Mammary epithelial cell (primary cell): ENCODE measurements at regions of chr9 and their contacts with region 1.

Region 1: GRCh38 chr9:137295238-137295811 is 6.7 kb downstream of the NRARP start:
- DNase-seq: no peak
- H3K4me3 ChIP-seq: peak overlapping the region in 2 of 3 experiments; percentile 12 to 43
- H3K27ac ChIP-seq: no peak overlapping the region
- H3K4me1 ChIP-seq: peaks cover 18% of the 10 kb centered on the region
- H3K27me3 ChIP-seq: peaks cover 2% of the 10 kb centered on the region
- CTCF ChIP-seq: peak; percentile 41

Region 2: DNA sequence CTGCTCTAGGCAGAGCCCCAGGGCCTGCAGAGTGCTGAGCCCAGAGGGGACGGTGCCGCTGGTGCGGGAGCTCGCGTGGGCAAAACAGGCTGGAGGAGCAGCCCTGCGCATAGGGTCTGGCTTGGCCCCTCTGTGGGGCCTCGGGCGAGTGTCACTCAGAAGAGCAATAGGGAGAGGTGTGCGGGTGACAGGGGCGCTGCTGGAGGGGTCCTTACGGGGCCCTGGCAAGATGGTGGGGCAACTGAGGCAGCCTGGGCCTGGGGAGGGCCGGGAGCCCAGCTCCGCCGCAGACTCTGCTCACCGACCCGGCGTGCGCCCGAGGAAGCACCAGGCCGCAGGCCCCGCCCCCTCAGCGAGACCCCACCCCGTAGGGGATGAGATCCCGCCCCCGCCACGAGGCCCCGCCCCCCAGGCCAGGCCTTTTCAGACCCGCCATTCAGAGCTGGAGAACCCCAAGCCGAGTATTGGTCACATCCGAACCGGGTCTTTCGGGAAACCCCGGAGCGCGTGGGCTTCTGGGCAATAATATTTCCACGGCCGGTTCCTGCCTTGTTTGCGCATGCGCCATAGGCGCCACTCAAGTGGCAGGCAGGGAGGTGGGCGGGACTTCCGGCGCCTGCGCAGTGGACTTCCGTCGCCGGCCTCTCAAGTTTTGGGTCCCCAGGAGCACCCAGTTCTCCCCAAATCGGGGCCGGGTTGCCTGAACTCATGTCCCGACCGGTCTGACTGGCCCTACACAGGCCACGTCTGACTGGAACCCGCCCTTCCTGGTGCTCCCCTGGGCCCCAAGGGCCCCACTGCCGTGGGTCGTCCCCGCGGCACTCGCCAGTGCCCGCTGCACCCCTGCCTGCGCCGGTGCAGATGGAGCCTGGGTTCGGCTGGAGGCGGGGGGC is 72.0 kb before region 1 on chr9:
- CTCF ChIA-PET with region 1: no interaction called
- dilution Hi-C with region 1: no loop called
- in situ Hi-C with region 1: no loop called
- intact Hi-C with region 1: no loop called
- DNase-seq: peak; percentile 96
- H3K4me3 ChIP-seq: peak overlapping the region; percentile 65 to 74 (median 67)
- H3K27ac ChIP-seq: peak overlapping the region; percentile 59
- H3K4me1 ChIP-seq: peaks cover 58% of the 10 kb centered on the region
- H3K27me3 ChIP-seq: no peaks in the 10 kb centered on the region
- CTCF ChIP-seq: no peak

Region 3: GRCh38 chr9:137406876-137407589 is 111.7 kb after region 1 on chr9:
- CTCF ChIA-PET with region 1: no interaction called
- dilution Hi-C with region 1: no loop called
- in situ Hi-C with region 1: no loop called
- intact Hi-C with region 1: loop called (anchors 2 kb)
- DNase-seq: peak; percentile 17
- H3K4me3 ChIP-seq: no peak overlapping the region
- H3K27ac ChIP-seq: no peak overlapping the region
- H3K4me1 ChIP-seq: peaks cover 23% of the 10 kb centered on the region
- H3K27me3 ChIP-seq: peaks cover 4% of the 10 kb centered on the region
- CTCF ChIP-seq: peak; percentile 30 to 49

Region 4: DNA sequence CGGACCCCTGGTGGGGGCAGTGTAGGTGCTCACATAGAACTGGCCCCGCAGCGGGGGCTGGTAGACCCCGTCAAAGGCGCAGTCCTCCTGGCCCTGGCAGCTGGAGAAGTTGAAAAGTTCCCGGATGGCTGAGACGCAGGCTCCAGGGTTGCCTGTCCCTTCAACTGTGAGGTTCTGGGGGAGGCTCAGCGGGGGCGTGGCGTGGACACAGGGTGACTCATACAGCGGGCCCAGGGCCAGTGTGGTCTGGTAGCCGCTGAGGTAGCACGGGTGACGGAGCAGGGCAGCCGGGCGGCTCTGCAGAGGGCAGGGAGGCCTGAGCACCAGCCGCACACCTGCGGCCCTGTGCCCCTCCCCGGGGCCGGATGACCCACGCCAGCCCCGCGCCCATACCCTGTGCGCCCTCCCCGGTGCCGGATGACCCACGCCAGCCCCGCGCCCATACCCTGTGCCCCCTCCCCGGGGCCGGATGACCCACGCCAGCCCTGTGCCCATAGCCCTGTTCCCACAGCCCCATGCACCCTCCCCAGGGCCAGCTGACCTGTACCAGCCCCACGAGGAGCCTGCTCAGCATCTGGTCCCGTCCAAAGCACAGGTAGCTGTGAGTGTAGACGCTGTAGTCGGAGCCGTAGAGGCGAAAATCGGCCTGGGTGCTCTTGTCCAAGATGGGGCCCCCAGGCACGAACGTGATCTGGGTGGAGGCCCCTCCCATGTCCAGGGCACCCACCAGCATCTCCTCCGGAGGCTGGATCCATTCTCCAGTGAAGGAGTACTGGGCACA is 140.8 kb after region 1 on chr9:
- CTCF ChIA-PET with region 1: no interaction called
- dilution Hi-C with region 1: no loop called
- in situ Hi-C with region 1: loop called (anchors 10 kb)
- intact Hi-C with region 1: no loop called
- DNase-seq: peak; percentile 80
- H3K4me3 ChIP-seq: no peak overlapping the region
- H3K27ac ChIP-seq: no peak overlapping the region
- H3K4me1 ChIP-seq: peaks cover 18% of the 10 kb centered on the region
- H3K27me3 ChIP-seq: no peaks in the 10 kb centered on the region
- CTCF ChIP-seq: no peak

Region 5: DNA sequence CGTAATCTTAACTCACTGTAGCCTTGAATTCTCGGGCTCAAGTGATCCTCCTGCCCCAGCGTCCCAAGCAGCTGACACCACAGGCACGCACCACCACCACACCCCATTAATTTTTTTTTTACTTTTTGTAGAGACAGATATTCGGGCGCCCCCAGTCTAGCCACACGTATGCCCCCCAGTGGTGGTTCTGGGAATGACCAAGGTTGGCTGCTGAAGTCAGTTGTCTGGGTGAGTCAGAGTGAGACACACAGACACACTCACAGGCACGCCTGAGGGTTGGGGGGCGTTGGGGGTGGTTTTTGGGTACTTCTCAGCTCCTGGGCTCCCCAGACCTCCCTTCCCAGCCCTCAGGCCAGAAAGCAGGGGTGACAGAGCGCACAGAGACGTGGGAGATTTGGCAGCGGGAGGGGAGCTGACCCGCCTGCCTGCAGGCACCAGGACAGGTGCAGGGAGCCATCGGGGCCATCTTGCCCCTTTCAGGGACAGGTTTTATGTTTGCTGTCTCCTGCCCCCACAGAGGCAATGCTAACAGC is 150.0 kb after region 1 on chr9:
- CTCF ChIA-PET with region 1: no interaction called
- dilution Hi-C with region 1: no loop called
- in situ Hi-C with region 1: loop called in 1 of 2 experiments (anchors 10 kb)
- intact Hi-C with region 1: loop called (anchors 1 kb)
- DNase-seq: peak; percentile 81
- H3K4me3 ChIP-seq: no peak overlapping the region
- H3K27ac ChIP-seq: no peak overlapping the region
- H3K4me1 ChIP-seq: peaks cover 17% of the 10 kb centered on the region
- H3K27me3 ChIP-seq: no peaks in the 10 kb centered on the region
- CTCF ChIP-seq: peak; percentile 81 to 83

Region 6: DNA sequence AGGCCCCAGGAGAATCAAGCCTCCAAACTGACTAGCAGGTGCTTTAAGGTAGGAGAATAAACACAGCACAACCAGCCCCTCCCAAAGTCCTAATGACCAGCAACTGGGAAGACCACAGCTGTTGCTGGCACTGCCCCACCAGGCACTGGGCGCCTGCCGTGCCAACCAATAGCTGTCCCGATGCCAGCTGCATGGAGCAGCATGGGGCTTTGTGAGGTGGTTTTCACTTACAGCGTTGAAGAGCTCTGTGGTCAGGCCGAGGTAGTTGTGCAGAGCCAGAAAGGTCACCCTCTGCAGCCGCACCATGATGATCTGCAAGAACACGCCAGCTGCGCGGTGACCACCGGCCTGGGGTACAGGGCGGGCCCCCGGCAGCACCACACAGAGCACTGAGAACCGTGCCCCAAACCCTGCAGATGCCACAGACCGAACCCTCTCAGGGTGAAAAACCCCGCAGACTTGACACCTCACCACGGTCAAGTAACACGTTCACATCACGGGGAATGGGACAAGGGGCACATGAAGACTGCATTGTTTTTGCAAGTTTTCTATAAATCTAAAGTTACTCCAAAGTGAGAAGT is 226.2 kb after region 1 on chr9:
- CTCF ChIA-PET with region 1: no interaction called
- dilution Hi-C with region 1: no loop called
- in situ Hi-C with region 1: loop called in 1 of 2 experiments (anchors 10 kb)
- intact Hi-C with region 1: loop called (anchors 2 kb)
- DNase-seq: no peak
- H3K4me3 ChIP-seq: no peak overlapping the region
- H3K27ac ChIP-seq: no peak overlapping the region
- H3K4me1 ChIP-seq: no peaks in the 10 kb centered on the region
- H3K27me3 ChIP-seq: no peaks in the 10 kb centered on the region
- CTCF ChIP-seq: no peak